Common myeloid progenitor, CD34-positive (primary cell): ENCODE measurements at regions of chr11 and their contacts with region 1.

Region 1: DNA sequence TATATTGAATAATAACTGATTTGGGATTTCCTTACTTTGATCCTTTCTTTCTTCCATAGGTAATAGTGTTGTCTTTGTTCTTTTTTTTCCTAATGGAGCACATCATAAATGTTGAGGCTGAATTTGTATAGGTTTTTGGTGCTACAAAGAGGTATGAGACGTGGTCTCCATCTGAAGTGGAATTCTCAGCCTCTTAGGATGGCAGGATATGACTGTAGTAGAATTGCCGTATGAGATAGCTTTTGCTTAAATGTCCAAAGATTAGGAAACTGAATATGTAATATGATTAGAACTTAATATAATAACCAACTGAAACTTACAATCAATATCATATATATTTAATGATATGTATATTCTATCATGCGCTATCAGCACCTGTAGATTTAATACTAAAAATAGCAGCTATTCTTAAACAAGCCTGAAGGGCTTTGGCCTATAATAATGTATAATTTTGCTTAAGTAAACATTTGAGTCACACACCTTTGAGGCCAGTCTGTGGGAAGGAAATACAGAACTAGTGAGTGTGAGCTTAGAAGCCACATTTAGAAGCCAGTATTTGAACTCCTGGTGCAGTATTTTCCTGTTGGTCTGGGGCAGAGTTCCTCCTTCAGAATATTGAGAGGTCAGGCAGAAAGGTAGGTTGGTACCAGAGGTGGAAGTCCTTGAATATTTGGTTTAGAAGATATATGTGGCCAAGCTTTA is 62.6 kb downstream of the SWAP70 start:
- DNase-seq: peak in 2 of 3 donors; percentile 65 to 75
- H3K4me3 ChIP-seq: no peak overlapping the region
- H3K27ac ChIP-seq: peak overlapping the region in 1 of 2 experiments; percentile 33
- H3K4me1 ChIP-seq: peaks cover 10 to 38% (median 19%) of the 10 kb centered on the region in 4 experiments
- H3K27me3 ChIP-seq: no peaks in the 10 kb centered on the region

Region 2: GRCh38 chr11:9716275-9717039 is 10.0 kb before region 1 on chr11:
- CTCF ChIA-PET with region 1: interaction called, 21 read pairs
- POLR2A ChIA-PET with region 1: no interaction called
- DNase-seq: peak; percentile 93 to 99 (median 98)
- H3K4me3 ChIP-seq: peak overlapping the region in 4 of 7 experiments; percentile 7 to 65 (median 36)
- H3K27ac ChIP-seq: peak overlapping the region; percentile 83 to 84
- H3K4me1 ChIP-seq: peaks cover 36 to 68% (median 60%) of the 10 kb centered on the region in 4 experiments
- H3K27me3 ChIP-seq: no peaks in the 10 kb centered on the region